Heart left ventricle (tissue), 16 donors: ENCODE measurements at regions of chr15 and their contacts with region 1.

Region 1: GRCh38 chr15:31302778-31303725 is 23.6 kb upstream of the KLF13 start:
- DNase-seq: peak in 3 of 5 donors; percentile 43 to 66 (median 52)
- ATAC-seq: peak; percentile 26 to 49 (median 46)
- H3K4me3 ChIP-seq: no peak overlapping the region
- H3K27ac ChIP-seq: peak overlapping the region in 2 of 12 donors; percentile 6 to 29
- H3K4me1 ChIP-seq: peaks cover 0 to 81% (median 60%) of the 10 kb centered on the region in 12 donors
- H3K27me3 ChIP-seq: peaks cover 0 to 8% (median 0%) of the 10 kb centered on the region in 9 donors
- CTCF ChIP-seq: peak in 4 of 12 donors; percentile 7 to 36 (median 30)
- POLR2A ChIP-seq: no peak

Region 2: DNA sequence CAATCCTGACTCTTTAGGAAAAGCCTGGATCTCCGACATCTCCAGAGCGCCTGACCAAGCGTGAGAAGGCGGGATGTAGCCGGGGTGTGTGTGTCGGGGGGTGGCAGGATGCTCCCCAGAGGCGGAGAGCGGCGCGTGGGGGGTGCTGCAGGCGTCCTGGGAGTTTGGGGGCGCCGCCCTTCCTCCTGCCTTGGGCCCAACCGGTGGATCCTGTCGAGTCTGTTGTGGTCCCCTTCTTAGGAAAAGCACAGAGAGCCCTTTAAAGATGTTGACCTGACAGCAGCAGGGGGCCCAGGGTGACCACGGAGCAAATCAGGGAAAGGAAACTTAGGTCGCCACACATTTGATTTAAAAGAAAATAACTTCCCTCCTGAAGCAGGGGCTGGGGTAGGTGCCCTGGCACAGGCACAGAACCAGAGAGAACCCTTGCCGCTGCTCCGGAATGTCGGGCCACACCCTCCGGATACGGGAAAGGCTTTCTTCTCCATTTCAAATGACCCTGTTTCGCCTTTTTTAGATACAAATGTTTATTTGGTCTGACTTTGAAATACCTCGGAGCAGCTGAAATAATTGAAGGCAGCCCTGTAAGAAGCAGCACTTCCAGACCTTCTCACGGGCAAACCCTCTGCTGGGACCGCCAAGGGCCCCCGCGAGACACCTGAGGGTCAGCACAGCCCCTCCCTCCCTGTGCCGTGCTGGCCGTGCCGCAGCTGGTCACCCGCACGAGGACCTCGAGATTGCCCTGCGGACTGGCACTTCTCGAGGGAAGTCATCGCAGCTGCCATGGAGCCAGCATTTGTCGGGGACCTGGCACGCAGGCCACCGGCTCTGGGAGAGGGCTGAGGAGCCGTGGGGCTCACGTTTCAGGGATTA is 79.3 kb before region 1 on chr15:
- intact Hi-C with region 1: loop called in 4 of 10 experiments (anchors 5 kb)
- DNase-seq: peak in 1 of 5 donors; percentile 45
- ATAC-seq: peak in 3 of 4 donors; percentile 48 to 49 (median 49)
- H3K4me3 ChIP-seq: peak overlapping the region in 10 of 12 donors; percentile 9 to 43 (median 20)
- H3K27ac ChIP-seq: peak overlapping the region in 8 of 12 donors; percentile 2 to 86 (median 38)
- H3K4me1 ChIP-seq: peaks cover 0 to 49% (median 25%) of the 10 kb centered on the region in 12 donors
- H3K27me3 ChIP-seq: no peaks in the 10 kb centered on the region
- CTCF ChIP-seq: no peak
- POLR2A ChIP-seq: no peak

Region 3: DNA sequence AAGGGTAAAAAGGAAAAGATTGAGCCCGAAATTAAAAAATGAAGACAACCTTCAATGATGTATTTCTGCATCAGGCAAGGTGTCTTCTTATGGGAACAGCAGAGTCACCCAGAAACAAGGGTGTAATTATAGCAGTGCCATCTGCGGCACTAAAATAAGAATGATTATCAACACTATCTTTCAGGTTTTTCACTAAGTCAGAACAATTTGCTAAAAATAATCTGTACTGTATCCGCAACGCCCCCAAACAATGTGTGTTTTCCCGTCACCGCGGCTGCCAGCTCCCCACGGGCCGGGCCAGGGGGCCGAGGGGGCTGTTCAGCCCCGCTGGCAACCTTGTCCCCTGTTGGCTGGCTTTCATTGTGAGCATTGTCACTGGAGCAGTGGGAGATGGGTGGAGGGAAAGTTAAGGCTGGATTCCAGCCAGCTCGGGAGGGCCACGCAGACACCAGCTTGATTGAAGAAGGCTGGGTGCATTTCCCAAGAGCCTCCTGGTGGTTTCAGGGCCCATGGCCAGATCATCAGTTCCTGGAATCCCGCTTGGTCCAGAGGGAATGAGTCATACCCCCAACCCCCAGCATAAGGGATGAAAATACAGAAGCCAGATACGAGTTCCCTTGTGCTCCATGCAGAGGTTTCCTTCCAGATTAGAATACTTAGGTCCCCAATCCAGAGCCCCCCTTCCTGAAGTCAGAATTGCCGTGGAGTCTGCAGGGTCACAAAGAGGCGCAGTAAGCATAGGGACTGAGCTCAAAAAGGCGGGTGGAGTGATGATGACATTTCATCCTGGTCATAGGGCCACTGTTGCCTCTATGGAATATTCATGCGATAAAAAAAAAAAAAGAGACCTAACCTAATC is 66.6 kb before region 1 on chr15:
- intact Hi-C with region 1: loop called in 2 of 10 experiments (anchors 5 kb)
- DNase-seq: peak; percentile 82 to 89 (median 84)
- ATAC-seq: peak; percentile 83 to 96 (median 94)
- H3K4me3 ChIP-seq: peak overlapping the region in 8 of 12 donors; percentile 4 to 31 (median 23)
- H3K27ac ChIP-seq: peak overlapping the region; percentile 83 to 96 (median 90)
- H3K4me1 ChIP-seq: peaks cover 5 to 53% (median 30%) of the 10 kb centered on the region in 12 donors
- H3K27me3 ChIP-seq: no peaks in the 10 kb centered on the region
- CTCF ChIP-seq: peak in 3 of 12 donors; percentile 5 to 28 (median 12)
- POLR2A ChIP-seq: no peak

Region 4: GRCh38 chr15:31254431-31255175 is 48.4 kb before region 1 on chr15:
- intact Hi-C with region 1: loop called in 1 of 10 experiments (anchors 5 kb)
- DNase-seq: peak in 1 of 5 donors; percentile 70
- ATAC-seq: peak; percentile 18 to 74 (median 67)
- H3K4me3 ChIP-seq: no peak overlapping the region
- H3K27ac ChIP-seq: peak overlapping the region in 2 of 12 donors; percentile 55 to 76
- H3K4me1 ChIP-seq: peaks cover 0 to 34% (median 2%) of the 10 kb centered on the region in 12 donors
- H3K27me3 ChIP-seq: no peaks in the 10 kb centered on the region
- CTCF ChIP-seq: no peak
- POLR2A ChIP-seq: no peak

Region 5: DNA sequence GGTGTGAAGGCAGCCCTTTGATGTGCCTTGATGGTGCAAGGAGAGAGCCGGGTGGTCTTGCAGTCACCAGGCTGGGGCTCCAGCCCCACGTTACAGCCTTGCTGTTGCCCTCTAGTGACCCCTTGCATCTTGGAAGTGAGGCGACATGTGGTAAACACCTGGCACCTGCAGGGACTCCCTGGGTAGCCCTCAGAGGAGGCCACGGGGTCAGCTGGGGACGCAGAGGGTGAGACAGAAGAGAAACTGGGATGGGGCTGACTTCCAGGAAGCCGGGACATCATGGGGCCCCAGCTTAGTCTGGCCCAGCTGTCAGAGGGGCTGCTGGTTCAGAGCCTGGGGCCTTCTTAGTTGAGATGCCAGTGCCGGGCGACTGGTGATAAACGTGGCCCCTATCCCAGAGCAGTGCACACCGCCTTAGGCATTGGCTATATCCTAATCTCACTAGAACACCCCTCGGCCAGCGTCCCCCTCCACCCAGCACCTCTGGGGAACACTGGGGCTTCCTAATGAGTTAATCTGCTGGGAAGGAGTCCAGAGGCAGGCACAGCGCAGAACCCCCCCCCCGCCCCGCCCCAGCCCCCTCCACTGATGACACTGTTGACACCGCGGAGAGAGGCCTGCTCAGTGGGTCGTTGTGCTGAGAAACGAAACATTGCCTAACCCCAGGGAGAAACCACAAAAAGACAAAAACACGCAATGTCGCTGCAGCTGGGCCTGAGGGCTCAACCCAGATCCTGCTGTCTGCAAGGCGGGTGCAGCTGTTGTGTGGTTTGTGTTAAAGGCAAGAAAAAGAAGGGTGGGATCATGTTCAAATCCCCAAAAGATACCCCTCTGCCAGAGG is 37.0 kb before region 1 on chr15:
- intact Hi-C with region 1: loop called in 1 of 10 experiments (anchors 5 kb)
- DNase-seq: peak; percentile 38 to 82 (median 50)
- ATAC-seq: peak in 3 of 4 donors; percentile 55 to 66 (median 63)
- H3K4me3 ChIP-seq: no peak overlapping the region
- H3K27ac ChIP-seq: peak overlapping the region in 3 of 12 donors; percentile 17 to 96 (median 52)
- H3K4me1 ChIP-seq: peaks cover 0 to 79% (median 17%) of the 10 kb centered on the region in 12 donors
- H3K27me3 ChIP-seq: no peaks in the 10 kb centered on the region
- CTCF ChIP-seq: no peak
- POLR2A ChIP-seq: no peak

Region 6: DNA sequence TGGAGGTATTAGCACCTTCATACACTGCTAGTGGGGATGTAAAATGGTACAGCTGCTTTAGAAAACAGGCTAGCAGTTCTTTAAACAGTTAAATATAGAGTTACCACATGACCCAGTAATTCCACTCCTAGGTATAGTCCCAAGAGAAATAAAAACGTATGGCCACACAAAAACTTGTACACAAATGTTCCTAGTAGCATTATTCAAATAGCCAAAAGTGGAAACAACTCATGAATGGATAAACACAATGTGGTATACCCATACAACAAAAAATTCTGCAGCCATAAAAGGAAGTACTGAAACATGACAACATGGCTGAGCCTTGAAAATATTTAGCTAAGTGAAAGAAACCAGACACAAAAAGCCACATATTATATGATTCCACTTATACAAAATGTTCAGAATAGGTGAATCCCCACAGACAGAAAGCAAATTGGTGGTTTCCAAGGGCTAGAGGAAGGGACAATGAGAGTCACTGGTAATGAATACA is 17.2 kb before region 1 on chr15:
- intact Hi-C with region 1: loop called in 1 of 10 experiments (anchors 2 kb)
- DNase-seq: no peak
- ATAC-seq: no peak
- H3K4me3 ChIP-seq: no peak overlapping the region
- H3K27ac ChIP-seq: no peak overlapping the region
- H3K4me1 ChIP-seq: no peaks in the 10 kb centered on the region
- H3K27me3 ChIP-seq: no peaks in the 10 kb centered on the region
- CTCF ChIP-seq: no peak
- POLR2A ChIP-seq: no peak

Region 7: GRCh38 chr15:31317421-31318327 is 14.6 kb after region 1 on chr15:
- intact Hi-C with region 1: loop called in 1 of 10 experiments (anchors 2 kb)
- DNase-seq: no peak
- ATAC-seq: no peak
- H3K4me3 ChIP-seq: no peak overlapping the region
- H3K27ac ChIP-seq: no peak overlapping the region
- H3K4me1 ChIP-seq: peaks cover 0 to 23% (median 0%) of the 10 kb centered on the region in 12 donors
- H3K27me3 ChIP-seq: no peaks in the 10 kb centered on the region
- CTCF ChIP-seq: no peak
- POLR2A ChIP-seq: no peak